GM12878 (cell line): ENCODE measurements at regions of chr6 and their contacts with region 1.

Region 1: GRCh38 chr6:37303932-37304363 is 46.0 kb upstream of the TMEM217 start:
- DNase-seq: no peak
- ATAC-seq: peak; percentile 83
- H3K4me3 ChIP-seq: no peak overlapping the region
- H3K27ac ChIP-seq: no peak overlapping the region
- H3K4me1 ChIP-seq: peaks cover 5% of the 10 kb centered on the region
- H3K27me3 ChIP-seq: no peaks in the 10 kb centered on the region
- CTCF ChIP-seq: peak; percentile 55 to 60 (median 60); a peak in 5 of 6 replicates
- EP300 ChIP-seq: no peak
- POLR2A ChIP-seq: no peak
- RAD21 ChIP-seq: peak; percentile 54

Region 2: DNA sequence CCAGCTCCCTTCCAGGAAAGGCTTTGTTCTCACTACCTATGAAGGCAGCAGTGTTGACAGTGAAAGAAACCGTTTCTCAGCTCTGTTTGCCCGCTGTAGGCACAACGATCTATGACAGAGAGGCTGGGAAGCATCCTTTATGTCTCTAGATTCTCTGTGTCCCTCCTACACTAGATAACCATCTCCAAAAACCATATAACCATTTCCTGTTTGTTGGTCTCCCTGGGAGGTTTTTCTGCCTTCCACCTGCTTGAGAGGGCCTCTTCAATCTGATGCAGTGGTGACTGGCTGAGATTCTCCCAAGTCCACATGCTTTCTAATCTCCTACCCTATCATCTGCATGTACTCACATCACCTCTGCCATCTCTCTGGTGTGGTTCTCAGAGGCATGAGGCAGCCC is 14.0 kb before region 1 on chr6:
- CTCF ChIA-PET with region 1: interaction called, 15 read pairs
- POLR2A ChIA-PET with region 1: interaction called, 5 read pairs
- RAD21 ChIA-PET with region 1: interaction called, 3 read pairs
- SMC1A ChIA-PET with region 1: interaction called, 8 read pairs
- in situ Hi-C with region 1: no loop called
- intact Hi-C with region 1: no loop called
- DNase-seq: no peak
- ATAC-seq: no peak
- H3K4me3 ChIP-seq: no peak overlapping the region
- H3K27ac ChIP-seq: no peak overlapping the region
- H3K4me1 ChIP-seq: peaks cover 18% of the 10 kb centered on the region
- H3K27me3 ChIP-seq: no peaks in the 10 kb centered on the region
- CTCF ChIP-seq: no peak
- EP300 ChIP-seq: no peak
- POLR2A ChIP-seq: no peak
- RAD21 ChIP-seq: no peak

Region 3: GRCh38 chr6:37314487-37315156 is 10.7 kb after region 1 on chr6:
- CTCF ChIA-PET with region 1: interaction called, 112 read pairs
- POLR2A ChIA-PET with region 1: no interaction called
- RAD21 ChIA-PET with region 1: interaction called, 12 read pairs
- SMC1A ChIA-PET with region 1: interaction called, 25 read pairs
- in situ Hi-C with region 1: no loop called
- intact Hi-C with region 1: no loop called
- DNase-seq: no peak
- ATAC-seq: peak; percentile 89
- H3K4me3 ChIP-seq: no peak overlapping the region
- H3K27ac ChIP-seq: no peak overlapping the region
- H3K4me1 ChIP-seq: peaks cover 19% of the 10 kb centered on the region
- H3K27me3 ChIP-seq: no peaks in the 10 kb centered on the region
- CTCF ChIP-seq: peak; percentile 63 to 74 (median 73)
- EP300 ChIP-seq: no peak
- POLR2A ChIP-seq: no peak
- RAD21 ChIP-seq: peak; percentile 73